Testis (tissue), 5 donors: ENCODE measurements at regions of chr10 and their contacts with region 1.

Region 1: DNA sequence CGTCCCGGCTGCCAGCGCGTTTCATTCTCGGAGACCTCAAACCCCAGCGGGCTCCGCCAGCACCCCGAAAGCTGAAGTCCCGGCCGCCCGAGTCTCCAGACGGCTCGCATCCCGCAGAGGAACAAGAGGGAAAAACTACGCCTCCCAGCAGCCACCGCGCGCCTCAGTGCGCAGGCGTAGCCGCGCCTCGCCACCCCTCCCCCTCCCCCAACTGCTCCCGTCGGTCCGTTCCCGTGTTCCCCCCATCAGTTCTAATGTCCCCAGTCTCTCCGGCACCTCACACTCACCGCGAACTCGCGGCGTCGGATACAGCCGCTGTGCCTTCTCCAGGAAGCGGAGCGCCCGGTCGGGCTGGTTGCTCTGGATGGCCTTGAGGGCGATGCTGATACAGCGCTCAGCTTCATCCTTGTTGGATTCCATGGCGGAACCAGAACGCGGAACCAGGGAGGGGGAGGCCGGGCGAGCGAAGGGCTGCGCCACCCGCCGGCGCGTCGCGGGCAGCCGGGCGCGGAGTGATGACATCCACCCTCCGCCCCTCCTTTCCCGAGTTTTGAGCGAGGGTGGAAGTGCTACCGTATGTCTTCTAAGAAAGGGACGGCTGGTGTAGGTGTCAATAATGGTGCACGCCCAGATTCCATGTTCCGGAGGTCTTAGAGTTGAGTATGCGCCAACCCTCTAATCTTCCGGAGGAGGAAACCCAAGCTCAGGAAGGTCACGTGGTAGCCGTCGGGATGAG is at the start of gene DNAJB12:
- DNase-seq: peak; percentile 92
- H3K4me3 ChIP-seq: peak within 1 kb of the TSS; percentile 79 to 99
- H3K27ac ChIP-seq: peak within 1 kb of the TSS; percentile 93 to 97
- H3K4me1 ChIP-seq: peaks cover 24% of the 10 kb centered on the region
- H3K27me3 ChIP-seq: no peaks in the 10 kb centered on the region
- CTCF ChIP-seq: no peak
- POLR2A ChIP-seq: peak; percentile 12
- total RNA-seq, gene DNAJB12: 50.3 to 57.6 TPM

Region 2: GRCh38 chr10:72204296-72204695 is 150.3 kb before region 1 on chr10:
- intact Hi-C with region 1: no loop called
- DNase-seq: no peak
- H3K4me3 ChIP-seq: no peak overlapping the region
- H3K27ac ChIP-seq: peak overlapping the region; percentile 53 to 69
- H3K4me1 ChIP-seq: peaks cover 9% of the 10 kb centered on the region
- H3K27me3 ChIP-seq: no peaks in the 10 kb centered on the region
- CTCF ChIP-seq: no peak
- POLR2A ChIP-seq: no peak

Region 3: DNA sequence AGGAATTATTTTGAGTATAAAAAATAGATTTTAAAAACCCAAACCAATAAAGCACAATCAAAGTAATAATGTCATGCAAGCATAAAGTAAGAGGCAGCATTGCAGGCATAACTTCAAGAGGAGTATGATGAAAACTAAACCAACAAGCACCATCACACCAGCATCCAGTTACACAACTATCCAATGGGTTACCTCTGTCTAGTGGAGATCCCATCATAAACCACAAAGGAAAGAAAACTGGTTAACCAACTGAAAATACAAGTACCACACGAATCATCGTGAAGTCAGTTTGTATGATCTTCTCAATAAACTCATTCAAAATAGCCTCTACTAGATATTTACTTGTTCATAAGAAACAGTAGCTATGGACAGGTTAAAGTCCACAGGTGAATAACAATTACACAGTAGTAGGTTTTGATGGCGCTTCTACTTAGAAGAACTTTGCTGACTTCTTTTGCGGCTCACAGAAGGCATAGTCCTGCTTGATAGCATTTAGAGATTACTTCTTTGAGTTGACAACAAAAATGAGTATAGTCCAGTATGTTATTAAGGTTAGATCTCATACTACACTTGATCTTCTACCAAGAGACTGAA is 154.7 kb after region 1 on chr10:
- intact Hi-C with region 1: no loop called
- DNase-seq: no peak
- H3K4me3 ChIP-seq: no peak overlapping the region
- H3K27ac ChIP-seq: no peak overlapping the region
- H3K4me1 ChIP-seq: no peaks in the 10 kb centered on the region
- H3K27me3 ChIP-seq: no peaks in the 10 kb centered on the region
- CTCF ChIP-seq: no peak
- POLR2A ChIP-seq: no peak

Region 4: DNA sequence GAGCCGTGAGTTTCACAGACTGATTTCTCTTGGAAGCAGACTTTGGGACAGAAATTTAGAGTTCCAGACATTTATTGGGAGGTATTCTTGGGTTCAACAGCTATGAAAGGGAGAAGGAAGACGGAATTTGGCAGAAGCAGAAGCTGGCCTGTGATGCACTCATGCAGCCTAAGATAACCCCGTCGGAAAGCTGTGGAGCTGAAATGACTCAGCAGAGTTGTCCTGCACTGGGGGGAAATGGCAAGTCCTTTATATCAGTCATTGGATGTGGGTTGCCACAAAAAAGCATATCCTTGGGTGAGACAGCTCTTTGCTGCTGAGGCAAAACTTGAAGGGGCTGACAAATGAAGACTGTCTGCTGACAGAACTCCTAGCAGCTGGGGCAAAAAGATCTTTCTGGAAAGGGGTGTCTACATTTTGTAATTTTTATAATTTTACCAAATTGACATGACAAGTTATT is 282.8 kb after region 1 on chr10:
- intact Hi-C with region 1: loop called (anchors 10 kb)
- DNase-seq: peak; percentile 21
- H3K4me3 ChIP-seq: no peak overlapping the region
- H3K27ac ChIP-seq: no peak overlapping the region
- H3K4me1 ChIP-seq: no peaks in the 10 kb centered on the region
- H3K27me3 ChIP-seq: no peaks in the 10 kb centered on the region
- CTCF ChIP-seq: no peak
- POLR2A ChIP-seq: no peak